Thyroid gland (tissue), 4 donors: ENCODE measurements at regions of chr14 and their contacts with region 1.

Region 1: DNA sequence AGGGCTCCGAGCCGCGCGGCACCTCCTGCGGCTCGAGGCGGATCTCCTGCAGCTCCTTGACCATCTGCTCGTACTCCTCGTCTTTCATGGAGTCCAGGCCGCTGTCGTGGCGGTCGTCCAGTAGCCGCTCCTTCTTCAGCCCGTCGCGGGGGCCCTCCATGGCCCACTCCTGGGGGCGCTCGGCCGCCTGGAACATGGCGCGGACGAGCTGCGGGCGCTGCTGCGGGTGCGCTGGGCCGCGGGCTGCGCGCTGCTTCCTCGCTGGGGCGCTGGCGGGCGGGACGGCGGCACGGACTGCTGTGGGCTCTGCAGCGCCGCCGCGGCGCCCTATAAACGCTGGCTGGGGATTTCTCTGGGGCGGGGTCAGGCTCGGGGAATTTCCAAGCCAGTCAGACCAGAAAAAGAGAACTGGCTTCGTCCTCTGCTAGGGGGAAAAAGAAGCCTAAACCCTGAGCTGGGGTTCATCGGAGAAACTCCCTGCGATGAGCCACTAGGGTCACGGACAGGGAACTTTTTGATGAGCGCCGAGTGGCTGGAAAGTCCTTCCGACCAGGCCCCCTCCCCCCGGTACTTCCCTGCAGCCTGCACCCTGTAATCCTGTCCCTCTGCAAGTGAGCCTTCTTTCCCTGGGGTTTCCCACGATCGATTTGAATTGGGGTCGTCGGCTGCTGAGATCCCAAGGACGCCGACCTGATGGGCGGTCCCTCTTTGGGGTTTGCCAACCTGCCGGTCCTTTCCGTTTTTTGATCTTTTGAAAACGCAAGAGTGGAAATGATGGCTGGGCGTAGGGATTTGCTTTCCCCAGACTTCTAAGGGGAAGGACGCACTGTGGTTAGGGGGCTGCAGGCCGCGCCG is at the start of gene NFKBIA:
- DNase-seq: peak; percentile 89
- H3K4me3 ChIP-seq: peak within 1 kb of the TSS; percentile 69 to 98 (median 77)
- H3K27ac ChIP-seq: peak within 1 kb of the TSS; percentile 98 to 100 (median 100)
- H3K4me1 ChIP-seq: peaks cover 44 to 48% of the 10 kb centered on the region in 2 donors
- H3K27me3 ChIP-seq: no peaks in the 10 kb centered on the region
- CTCF ChIP-seq: peak in 3 of 6 experiments; percentile 23 to 37 (median 25)
- POLR2A ChIP-seq: peak; percentile 98 to 99
- total RNA-seq, gene NFKBIA: 200 to 434 (median 356) TPM

Region 2: GRCh38 chr14:35292051-35292769 is 112.5 kb before region 1 on chr14 and contains the start of gene PSMA6:
- intact Hi-C with region 1: loop called (anchors 5 kb)
- DNase-seq: peak; percentile 99 to 100
- H3K4me3 ChIP-seq: peak within 1 kb of the TSS; percentile 61 to 92 (median 88)
- H3K27ac ChIP-seq: peak within 1 kb of the TSS; percentile 74 to 87 (median 83)
- H3K4me1 ChIP-seq: peaks cover 18 to 27% of the 10 kb centered on the region in 2 donors
- H3K27me3 ChIP-seq: no peaks in the 10 kb centered on the region
- CTCF ChIP-seq: no peak
- POLR2A ChIP-seq: peak in 1 of 2 donors; percentile 84
- total RNA-seq, gene PSMA6: 107 to 157 (median 120) TPM

Region 3: GRCh38 chr14:35336494-35337268 is 68.0 kb before region 1 on chr14:
- intact Hi-C with region 1: loop called (anchors 5 kb)
- DNase-seq: peak; percentile 96 to 98
- H3K4me3 ChIP-seq: no peak overlapping the region
- H3K27ac ChIP-seq: peak overlapping the region; percentile 90 to 96 (median 93)
- H3K4me1 ChIP-seq: peaks cover 70 to 82% of the 10 kb centered on the region in 2 donors
- H3K27me3 ChIP-seq: no peaks in the 10 kb centered on the region
- CTCF ChIP-seq: peak in 1 of 6 experiments; percentile 25
- POLR2A ChIP-seq: peak in 1 of 2 donors; percentile 86

Region 4: GRCh38 chr14:35730871-35731270 is 326.2 kb after region 1 on chr14:
- intact Hi-C with region 1: no loop called
- DNase-seq: no peak
- H3K4me3 ChIP-seq: no peak overlapping the region
- H3K27ac ChIP-seq: no peak overlapping the region
- H3K4me1 ChIP-seq: no peaks in the 10 kb centered on the region
- H3K27me3 ChIP-seq: no peaks in the 10 kb centered on the region
- CTCF ChIP-seq: no peak
- POLR2A ChIP-seq: no peak